ENCODE measurements at regions of chr15 and their contacts with region 1.

Region 1: GRCh38 chr15:40044717-40045571 is 6.0 kb upstream of the SRP14 start:
- DNase-seq: peak; percentile 97
- H3K4me3 ChIP-seq: peak overlapping the region in 2 of 8 donors; percentile 4 to 29
- H3K27ac ChIP-seq: peak overlapping the region; percentile 10 to 88 (median 56)
- H3K4me1 ChIP-seq: peaks cover 37 to 72% (median 65%) of the 10 kb centered on the region in 6 donors
- H3K27me3 ChIP-seq: no peaks in the 10 kb centered on the region
- CTCF ChIP-seq: peak; percentile 81 to 96 (median 92)
- POLR2A ChIP-seq: no peak

Region 2: DNA sequence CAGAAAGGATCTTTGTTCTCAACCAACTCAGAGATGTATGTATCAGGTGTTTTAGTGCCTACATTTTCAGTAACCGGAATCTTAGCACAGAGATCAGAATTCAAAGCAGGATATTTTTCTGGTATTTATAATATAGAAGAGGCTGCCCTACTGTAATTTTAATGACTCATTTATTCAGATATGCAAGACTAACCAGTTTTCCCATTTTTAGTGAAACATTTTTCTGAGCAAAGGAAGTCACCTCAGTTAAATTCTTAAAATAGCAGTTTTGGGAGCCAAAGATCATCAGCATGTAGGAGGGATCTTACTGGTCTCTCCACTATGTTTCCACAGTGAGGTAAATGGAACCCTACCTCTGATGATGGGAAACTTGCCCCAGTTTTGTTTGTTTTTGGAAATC is 47.9 kb before region 1 on chr15:
- intact Hi-C with region 1: no loop called
- DNase-seq: no peak
- H3K4me3 ChIP-seq: no peak overlapping the region
- H3K27ac ChIP-seq: no peak overlapping the region
- H3K4me1 ChIP-seq: no peaks in the 10 kb centered on the region
- H3K27me3 ChIP-seq: no peaks in the 10 kb centered on the region
- CTCF ChIP-seq: no peak
- POLR2A ChIP-seq: no peak

Region 3: DNA sequence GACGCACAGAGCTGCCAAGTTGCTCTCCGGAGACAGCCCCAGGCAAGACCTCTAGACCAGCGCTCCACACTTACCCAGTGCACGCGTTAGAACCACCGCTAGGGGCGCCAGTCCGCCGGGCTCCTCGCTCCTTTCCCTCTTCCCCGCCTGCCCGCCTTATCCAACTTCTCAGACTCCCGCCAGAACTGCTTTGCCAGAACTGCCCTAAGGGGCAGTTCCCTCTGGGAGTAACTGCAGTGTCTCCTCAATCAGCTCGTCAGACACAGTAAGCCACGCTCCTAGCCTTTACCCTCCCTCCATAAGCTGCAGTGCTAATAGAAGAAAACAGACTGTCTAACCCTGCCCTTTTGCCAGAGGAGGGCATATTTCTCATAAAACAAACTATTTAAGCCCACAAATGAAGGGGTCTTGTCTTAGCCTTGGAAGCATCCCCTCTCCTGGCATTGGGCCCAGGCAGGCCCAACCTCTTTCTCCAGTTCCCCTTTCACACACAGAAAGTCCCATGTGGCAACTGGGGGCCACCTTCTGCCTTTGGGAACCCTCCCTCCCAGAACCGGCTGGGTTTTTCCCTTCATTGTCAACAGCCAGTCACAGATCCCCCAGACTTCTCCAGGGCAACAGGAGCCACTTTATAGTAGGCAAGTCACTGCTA is 60.0 kb after region 1 on chr15:
- intact Hi-C with region 1: loop called (anchors 5 kb)
- DNase-seq: peak; percentile 95
- H3K4me3 ChIP-seq: peak overlapping the region in 5 of 8 donors; percentile 10 to 81 (median 20)
- H3K27ac ChIP-seq: peak overlapping the region; percentile 62 to 92 (median 84)
- H3K4me1 ChIP-seq: peaks cover 63 to 95% (median 90%) of the 10 kb centered on the region in 6 donors
- H3K27me3 ChIP-seq: no peaks in the 10 kb centered on the region
- CTCF ChIP-seq: peak; percentile 69 to 97 (median 91)
- POLR2A ChIP-seq: no peak

Region 4: GRCh38 chr15:40217159-40217824 is 172.3 kb after region 1 on chr15:
- intact Hi-C with region 1: loop called (anchors 2 kb)
- DNase-seq: no peak
- H3K4me3 ChIP-seq: no peak overlapping the region
- H3K27ac ChIP-seq: no peak overlapping the region
- H3K4me1 ChIP-seq: peaks cover 0 to 3% (median 0%) of the 10 kb centered on the region in 6 donors
- H3K27me3 ChIP-seq: no peaks in the 10 kb centered on the region
- CTCF ChIP-seq: peak; percentile 79 to 95 (median 88)
- POLR2A ChIP-seq: no peak

Region 5: GRCh38 chr15:40489274-40490175 is 444.6 kb after region 1 on chr15:
- intact Hi-C with region 1: no loop called
- DNase-seq: no peak
- H3K4me3 ChIP-seq: no peak overlapping the region
- H3K27ac ChIP-seq: no peak overlapping the region
- H3K4me1 ChIP-seq: peaks cover 0 to 11% (median 0%) of the 10 kb centered on the region in 6 donors
- H3K27me3 ChIP-seq: peaks cover 0 to 6% (median 0%) of the 10 kb centered on the region in 7 donors
- CTCF ChIP-seq: no peak
- POLR2A ChIP-seq: no peak